ENCODE measurements at regions of chr5 and their contacts with region 1.

Region 1: DNA sequence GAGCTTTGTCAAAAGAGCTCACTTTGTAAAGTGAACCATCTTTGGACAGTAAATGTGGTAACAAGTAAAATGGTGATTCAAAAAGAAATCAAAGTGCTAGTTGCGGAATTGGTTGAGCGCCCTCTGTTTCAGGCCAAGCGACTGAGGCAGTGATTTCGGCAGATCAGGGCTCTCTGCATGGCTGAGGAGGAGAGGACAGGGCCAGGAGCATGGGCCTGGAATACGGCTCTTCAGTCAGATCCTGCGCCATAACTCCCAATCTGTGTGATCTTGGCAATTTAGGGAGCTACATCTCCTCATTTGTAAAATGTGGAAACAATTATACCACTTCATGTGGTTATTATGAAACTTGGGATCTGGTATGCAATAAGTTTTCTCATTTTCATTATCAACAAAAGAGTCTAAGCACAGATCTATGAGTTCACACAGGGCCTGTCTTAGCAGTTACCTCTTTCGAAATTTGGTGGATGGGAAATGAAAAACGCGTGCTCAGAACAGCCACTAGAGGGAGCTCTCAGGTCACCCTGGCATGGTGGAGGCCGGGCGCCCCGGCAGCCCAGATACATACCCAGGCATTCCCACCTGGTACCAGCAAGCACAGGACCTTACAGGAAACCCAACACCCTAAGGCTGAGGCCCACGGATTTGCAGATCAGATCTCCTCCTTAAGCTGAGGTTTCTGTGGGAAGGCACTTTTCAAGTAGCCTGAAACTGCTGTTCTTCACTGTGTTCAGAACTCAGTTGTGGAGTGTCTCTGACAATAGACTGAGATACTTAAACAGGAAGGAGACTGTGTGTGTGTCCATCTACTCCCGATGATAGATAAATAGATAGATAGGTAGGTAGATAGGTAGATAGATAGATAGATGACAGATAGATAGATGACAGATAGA is 303.7 kb downstream of the RAB3C start:
- DNase-seq: peak; percentile 83
- ATAC-seq: peak; percentile 66
- H3K4me3 Mint-ChIP-seq: peak overlapping the region; percentile 3
- H3K27ac Mint-ChIP-seq: peak overlapping the region; percentile 83
- H3K4me1 Mint-ChIP-seq: peaks cover 41% of the 10 kb centered on the region
- H3K27me3 Mint-ChIP-seq: peaks cover 2% of the 10 kb centered on the region

Region 2: DNA sequence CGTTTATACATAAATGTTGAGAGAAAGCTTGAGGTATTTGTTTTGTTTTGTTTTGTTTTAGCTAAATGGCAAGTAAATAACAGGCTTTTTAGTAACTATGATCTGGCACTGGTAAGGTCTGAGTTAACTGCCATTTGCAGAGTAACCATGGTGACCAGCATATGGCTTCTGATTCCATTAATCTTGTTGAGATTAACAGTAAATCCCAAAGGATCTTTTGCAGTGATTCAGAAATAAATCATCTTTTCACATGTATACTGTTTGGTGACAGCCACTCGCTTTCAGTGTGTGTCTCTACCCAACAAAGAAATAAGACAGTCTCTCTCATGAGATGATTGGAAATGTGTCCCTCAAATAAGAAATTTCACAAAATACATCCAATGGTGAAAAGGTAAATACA is 68.1 kb before region 1 on chr5:
- CTCF ChIA-PET with region 1: no interaction called
- POLR2A ChIA-PET with region 1: no interaction called
- intact Hi-C with region 1: no loop called
- DNase-seq: no peak
- ATAC-seq: no peak
- H3K4me3 Mint-ChIP-seq: no peak overlapping the region
- H3K27ac Mint-ChIP-seq: no peak overlapping the region
- H3K4me1 Mint-ChIP-seq: no peaks in the 10 kb centered on the region
- H3K27me3 Mint-ChIP-seq: no peaks in the 10 kb centered on the region

Region 3: DNA sequence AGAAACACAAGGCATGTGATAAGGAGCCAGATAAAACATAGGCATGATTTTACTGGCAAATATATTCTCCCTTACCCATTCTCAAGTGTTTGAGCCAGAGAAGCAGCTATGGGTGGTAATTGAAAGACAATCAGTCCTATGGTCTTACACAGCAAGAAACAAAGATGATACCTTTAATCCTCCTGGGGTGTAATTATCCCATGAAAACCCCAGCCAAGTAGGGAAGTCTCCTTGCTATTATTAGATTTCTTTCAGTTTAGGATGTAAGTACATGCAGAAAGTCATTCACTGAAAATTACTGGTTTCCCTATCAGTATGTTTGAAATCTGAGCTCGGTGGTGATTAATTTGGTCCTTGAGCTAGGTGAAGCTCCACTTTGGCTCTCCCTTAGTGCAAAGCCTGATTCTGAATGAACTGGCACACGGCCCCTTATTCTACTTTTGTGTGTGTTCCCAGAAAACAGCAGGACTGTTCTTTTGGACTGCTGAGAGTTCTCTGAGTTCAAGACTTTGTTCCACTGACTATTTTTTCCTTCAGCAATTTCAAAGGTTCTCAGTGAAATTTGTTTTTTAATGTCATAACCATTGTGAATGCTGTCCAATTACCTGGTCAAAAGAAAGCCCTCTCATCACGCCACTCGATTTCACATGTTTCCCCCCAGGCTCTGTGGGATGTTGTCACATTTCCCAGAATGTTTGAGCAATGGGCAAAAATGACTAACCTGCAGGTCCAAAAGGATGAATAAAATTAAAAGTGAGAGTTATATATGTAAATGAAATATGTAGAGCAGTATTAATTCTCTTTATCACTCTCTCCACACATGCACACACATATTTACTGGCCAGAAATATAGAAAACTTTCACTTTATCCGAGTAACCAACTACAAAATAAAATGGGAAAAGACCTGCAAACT is 39.3 kb after region 1 on chr5:
- CTCF ChIA-PET with region 1: interaction called, 3 read pairs
- POLR2A ChIA-PET with region 1: no interaction called
- intact Hi-C with region 1: loop called (anchors 1 to 2 kb)
- DNase-seq: peak; percentile 46
- ATAC-seq: peak; percentile 77
- H3K4me3 Mint-ChIP-seq: peak overlapping the region; percentile 37
- H3K27ac Mint-ChIP-seq: peak overlapping the region; percentile 87
- H3K4me1 Mint-ChIP-seq: peaks cover 43% of the 10 kb centered on the region
- H3K27me3 Mint-ChIP-seq: peaks cover 6% of the 10 kb centered on the region

Region 4: DNA sequence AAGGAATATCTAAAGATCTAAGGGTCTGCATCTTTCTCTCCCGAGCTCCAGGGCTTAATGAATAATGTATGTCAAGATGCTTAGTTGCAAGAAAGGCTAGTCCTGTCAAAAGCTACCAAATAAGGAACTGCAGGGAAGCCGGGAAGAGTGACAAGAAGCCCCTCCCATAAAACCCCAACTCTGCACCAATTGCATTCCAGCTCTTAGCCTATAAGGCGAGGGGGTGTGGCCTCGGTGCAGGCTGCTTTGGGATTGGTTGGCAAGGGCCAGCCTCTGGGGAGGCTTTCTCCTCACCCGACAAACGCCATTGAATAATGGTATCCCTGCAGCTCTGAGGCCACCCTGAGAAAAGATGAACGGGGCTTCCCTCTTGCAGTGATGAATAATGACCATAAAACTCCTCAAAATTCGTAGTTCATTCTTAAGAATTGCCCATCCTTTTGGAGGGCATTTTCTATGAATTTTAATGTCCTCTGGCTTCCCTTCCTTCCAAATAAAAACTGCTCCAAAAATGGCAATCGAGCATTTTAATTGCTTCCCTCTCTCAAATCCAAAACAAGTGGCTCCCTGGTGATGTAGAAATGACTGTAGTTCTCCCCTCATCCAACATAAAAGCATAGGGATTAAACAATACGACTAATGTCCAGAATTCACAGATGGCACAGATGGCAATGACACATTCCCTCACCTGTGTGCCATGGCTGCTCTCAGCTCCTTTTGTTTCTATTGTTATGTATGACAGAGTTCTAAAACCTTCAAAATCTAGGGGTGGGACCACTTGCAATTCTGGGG is 113.4 kb after region 1 on chr5:
- CTCF ChIA-PET with region 1: interaction called, 22 read pairs
- POLR2A ChIA-PET with region 1: no interaction called
- intact Hi-C with region 1: no loop called
- DNase-seq: peak; percentile 27
- ATAC-seq: no peak
- H3K4me3 Mint-ChIP-seq: no peak overlapping the region
- H3K27ac Mint-ChIP-seq: no peak overlapping the region
- H3K4me1 Mint-ChIP-seq: peaks cover 54% of the 10 kb centered on the region
- H3K27me3 Mint-ChIP-seq: no peaks in the 10 kb centered on the region

Region 5: GRCh38 chr5:59039296-59040023 is 152.9 kb after region 1 on chr5:
- CTCF ChIA-PET with region 1: interaction called, 11 read pairs
- POLR2A ChIA-PET with region 1: interaction called, 5 read pairs
- intact Hi-C with region 1: loop called (anchors 1 kb)
- DNase-seq: peak; percentile 95
- ATAC-seq: peak; percentile 75
- H3K4me3 Mint-ChIP-seq: peak overlapping the region; percentile 86
- H3K27ac Mint-ChIP-seq: peak overlapping the region; percentile 88
- H3K4me1 Mint-ChIP-seq: peaks cover 39% of the 10 kb centered on the region
- H3K27me3 Mint-ChIP-seq: no peaks in the 10 kb centered on the region

Region 6: GRCh38 chr5:59188419-59189225 is 302.1 kb after region 1 on chr5:
- CTCF ChIA-PET with region 1: interaction called, 15 read pairs
- POLR2A ChIA-PET with region 1: no interaction called
- intact Hi-C with region 1: loop called (anchors 1 to 5 kb)
- DNase-seq: peak; percentile 78
- ATAC-seq: peak; percentile 75
- H3K4me3 Mint-ChIP-seq: no peak overlapping the region
- H3K27ac Mint-ChIP-seq: no peak overlapping the region
- H3K4me1 Mint-ChIP-seq: peaks cover 5% of the 10 kb centered on the region
- H3K27me3 Mint-ChIP-seq: peaks cover 14% of the 10 kb centered on the region

Region 7: GRCh38 chr5:59799668-59800346 is 913.2 kb after region 1 on chr5:
- CTCF ChIA-PET with region 1: no interaction called
- POLR2A ChIA-PET with region 1: no interaction called
- intact Hi-C with region 1: loop called in 1 of 2 experiments (anchors 10 kb)
- DNase-seq: peak; percentile 23
- ATAC-seq: peak; percentile 74
- H3K4me3 Mint-ChIP-seq: no peak overlapping the region
- H3K27ac Mint-ChIP-seq: no peak overlapping the region
- H3K4me1 Mint-ChIP-seq: no peaks in the 10 kb centered on the region
- H3K27me3 Mint-ChIP-seq: no peaks in the 10 kb centered on the region

Measured in activated CD4-positive, alpha-beta T cell treated with anti-CD3 and anti-CD28 coated beads for 36 hours (primary cell).